Activated CD4-positive, alpha-beta T cell treated with anti-CD3 and anti-CD28 coated beads, Interleukin-2, amount 10 ng/mL, durations not matched to agents 24 days and 14 days (primary cell): ENCODE measurements at regions of chr3 and their contacts with region 1.

Region 1: DNA sequence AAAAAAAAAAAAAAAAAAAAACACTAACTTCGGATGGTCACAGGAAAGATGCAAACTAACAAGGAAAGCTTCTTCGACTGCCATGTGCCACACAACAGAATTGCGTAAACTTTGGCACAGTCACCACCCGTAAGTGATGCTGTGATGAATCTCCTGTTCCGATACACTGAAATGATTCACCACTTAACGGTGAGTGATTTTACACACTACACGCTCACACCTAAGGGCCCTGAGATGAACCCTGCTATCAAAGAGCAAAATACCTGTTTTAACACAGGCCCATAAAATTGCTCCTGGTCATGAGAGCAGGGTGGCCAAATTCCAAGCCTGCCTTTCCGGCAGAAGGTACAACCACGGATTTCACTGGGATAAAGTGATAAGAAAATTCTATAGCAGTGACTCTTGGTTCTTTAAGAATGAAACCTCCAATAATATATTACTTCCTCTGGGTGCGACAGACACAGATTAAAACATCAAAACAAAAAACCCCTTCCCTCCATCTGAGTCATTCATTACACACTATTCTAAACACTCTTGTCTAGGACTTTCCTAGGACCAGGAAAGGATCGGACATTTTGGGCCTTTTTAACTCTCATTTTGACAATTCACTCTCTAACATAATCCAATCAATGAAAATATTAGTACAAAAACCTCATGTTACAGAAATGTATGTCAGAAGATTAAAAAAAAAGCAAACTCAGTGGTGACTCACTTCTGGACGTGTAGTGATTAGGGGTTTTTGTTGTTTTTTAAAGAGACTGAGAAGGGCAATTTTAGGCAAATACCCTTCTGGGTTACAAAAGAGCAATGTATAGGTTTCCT is 28.3 kb downstream of the LRIG1 start:
- DNase-seq: peak; percentile 80
- H3K4me3 Mint-ChIP-seq: no peak overlapping the region
- H3K27ac Mint-ChIP-seq: no peak overlapping the region
- H3K4me1 Mint-ChIP-seq: peaks cover 62% of the 10 kb centered on the region
- H3K27me3 Mint-ChIP-seq: no peaks in the 10 kb centered on the region

Region 2: DNA sequence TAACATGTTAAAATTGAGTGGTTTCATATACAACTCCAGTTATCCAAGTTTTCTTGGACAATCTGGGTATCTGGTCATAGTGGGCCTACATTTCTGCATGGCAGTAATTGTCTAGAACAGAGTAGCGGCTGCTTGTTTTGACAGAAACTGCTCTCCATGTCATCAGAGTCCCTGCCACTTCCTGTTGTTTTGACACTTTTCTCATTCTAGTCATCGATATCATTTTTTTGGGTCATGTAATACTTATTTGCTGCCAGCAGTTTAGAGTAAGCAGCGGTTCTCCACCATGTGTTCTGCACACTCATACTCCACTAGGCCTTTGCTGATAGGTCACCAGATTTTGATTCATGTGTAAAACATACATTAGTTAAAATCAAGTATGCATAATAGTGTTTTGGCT is 170.2 kb before region 1 on chr3:
- intact Hi-C with region 1: loop called (anchors 2 kb)
- DNase-seq: peak; percentile 80
- H3K4me3 Mint-ChIP-seq: peak overlapping the region; percentile 68
- H3K27ac Mint-ChIP-seq: peak overlapping the region; percentile 95
- H3K4me1 Mint-ChIP-seq: peaks cover 53% of the 10 kb centered on the region
- H3K27me3 Mint-ChIP-seq: no peaks in the 10 kb centered on the region

Region 3: GRCh38 chr3:66407611-66408218 is 64.8 kb before region 1 on chr3:
- intact Hi-C with region 1: loop called (anchors 5 kb)
- DNase-seq: peak; percentile 93
- H3K4me3 Mint-ChIP-seq: no peak overlapping the region
- H3K27ac Mint-ChIP-seq: peak overlapping the region; percentile 60
- H3K4me1 Mint-ChIP-seq: peaks cover 8% of the 10 kb centered on the region
- H3K27me3 Mint-ChIP-seq: no peaks in the 10 kb centered on the region

Region 4: DNA sequence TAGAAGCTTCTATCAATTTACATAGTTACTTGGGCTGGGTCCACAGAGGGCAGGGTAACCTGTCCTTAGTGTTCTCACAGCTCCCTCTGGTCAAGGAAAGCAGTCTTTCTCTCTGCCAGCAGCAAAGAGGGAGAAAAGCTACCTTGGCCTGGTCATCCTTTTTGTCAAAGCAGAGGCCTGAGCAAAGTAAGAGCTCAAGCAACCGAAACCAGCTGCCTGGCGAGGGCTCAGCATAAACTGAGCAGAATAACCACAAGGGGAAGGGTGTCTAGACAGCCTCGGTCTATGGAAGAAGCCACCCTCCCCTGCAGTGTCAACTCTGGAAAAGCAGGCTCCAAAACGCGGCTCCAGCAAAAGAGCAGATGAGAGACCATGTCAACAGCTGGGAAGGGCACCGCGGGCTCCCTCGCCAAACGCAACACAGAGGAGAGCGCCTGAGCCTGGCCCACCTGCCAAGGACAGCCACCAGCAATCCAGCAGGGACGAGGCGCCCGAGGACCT is 10.9 kb after region 1 on chr3:
- intact Hi-C with region 1: loop called (anchors 1 kb)
- DNase-seq: peak; percentile 73
- H3K4me3 Mint-ChIP-seq: peak overlapping the region; percentile 66
- H3K27ac Mint-ChIP-seq: peak overlapping the region; percentile 39
- H3K4me1 Mint-ChIP-seq: peaks cover 83% of the 10 kb centered on the region
- H3K27me3 Mint-ChIP-seq: no peaks in the 10 kb centered on the region

Region 5: DNA sequence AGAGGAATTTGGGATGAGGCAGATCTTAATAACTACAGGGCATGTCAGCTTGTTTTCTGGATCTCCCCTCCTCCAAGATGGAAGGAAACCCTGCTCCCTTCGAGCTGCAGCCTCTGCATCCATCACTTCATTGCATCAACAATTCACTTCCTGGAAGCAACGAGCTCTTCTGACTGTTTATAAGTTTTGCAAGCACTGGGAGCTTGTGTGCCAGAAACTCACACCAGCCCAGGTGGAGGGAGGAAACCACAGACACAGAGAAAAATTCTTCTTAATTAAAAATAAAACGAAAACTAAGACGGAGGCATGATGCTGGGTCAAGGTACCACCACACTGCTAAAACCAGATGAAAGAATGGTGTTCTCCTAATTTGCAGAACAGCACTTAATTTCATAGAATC is 17.7 kb after region 1 on chr3:
- intact Hi-C with region 1: loop called (anchors 1 kb)
- DNase-seq: peak; percentile 83
- H3K4me3 Mint-ChIP-seq: peak overlapping the region; percentile 77
- H3K27ac Mint-ChIP-seq: peak overlapping the region; percentile 88
- H3K4me1 Mint-ChIP-seq: peaks cover 82% of the 10 kb centered on the region
- H3K27me3 Mint-ChIP-seq: no peaks in the 10 kb centered on the region

Region 6: GRCh38 chr3:66567077-66567476 is 94.6 kb after region 1 on chr3:
- intact Hi-C with region 1: no loop called
- DNase-seq: no peak
- H3K4me3 Mint-ChIP-seq: no peak overlapping the region
- H3K27ac Mint-ChIP-seq: no peak overlapping the region
- H3K4me1 Mint-ChIP-seq: no peaks in the 10 kb centered on the region
- H3K27me3 Mint-ChIP-seq: peaks cover 8% of the 10 kb centered on the region